Activated B cell treated with CpG ODN at 0.5 μM for 24 hours (primary cell): ENCODE measurements at regions of chr1 and their contacts with region 1.

Region 1: DNA sequence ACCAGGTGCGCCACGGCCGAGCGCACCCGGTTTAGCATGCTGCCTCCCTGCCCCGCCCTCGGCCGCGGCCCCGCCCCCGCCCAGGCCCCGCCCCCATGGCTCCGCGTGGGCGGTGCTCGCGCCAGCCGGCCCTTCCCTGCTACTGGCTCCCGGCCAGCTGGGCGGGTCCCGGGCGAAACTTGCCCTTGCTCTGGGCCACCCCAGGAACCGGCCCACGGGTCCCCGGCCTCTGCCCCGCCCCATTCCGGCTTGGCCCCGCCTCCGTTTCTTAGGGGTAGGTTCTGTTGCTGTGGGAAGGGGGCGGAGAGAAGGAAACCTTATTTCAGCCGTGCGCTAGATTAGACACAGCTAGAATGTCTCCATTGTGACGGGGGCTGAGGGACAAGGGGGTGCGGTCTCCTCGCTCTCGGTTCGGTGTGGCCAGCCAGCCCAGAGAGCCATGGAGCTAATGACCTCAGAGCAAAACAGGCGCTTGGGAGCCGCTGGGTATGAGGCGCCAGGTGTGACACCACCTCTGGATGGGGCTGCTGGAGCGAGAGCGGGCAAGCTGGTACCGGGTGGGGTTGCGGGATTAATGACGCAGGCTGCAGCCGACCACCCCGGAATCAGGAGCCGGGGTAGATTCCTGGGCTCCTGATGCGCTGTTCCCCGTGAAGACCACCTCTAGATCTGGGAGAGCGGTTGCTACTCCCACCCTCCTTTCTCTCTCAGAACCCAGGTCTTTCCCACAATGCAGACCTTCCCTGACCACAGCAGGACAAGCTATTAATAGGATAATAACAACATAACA is at the start of gene PPM1J:
- DNase-seq: peak; percentile 99
- ATAC-seq: peak; percentile 88
- H3K4me3 Mint-ChIP-seq: peak within 1 kb of the TSS; percentile 84
- H3K27ac Mint-ChIP-seq: peak within 1 kb of the TSS; percentile 74
- H3K4me1 Mint-ChIP-seq: peaks cover 37% of the 10 kb centered on the region
- H3K27me3 Mint-ChIP-seq: peaks cover 5% of the 10 kb centered on the region
- CTCF ChIP-seq: no peak
- total RNA-seq, gene PPM1J: 0.46 and 0.75 TPM in 2 replicates

Region 2: DNA sequence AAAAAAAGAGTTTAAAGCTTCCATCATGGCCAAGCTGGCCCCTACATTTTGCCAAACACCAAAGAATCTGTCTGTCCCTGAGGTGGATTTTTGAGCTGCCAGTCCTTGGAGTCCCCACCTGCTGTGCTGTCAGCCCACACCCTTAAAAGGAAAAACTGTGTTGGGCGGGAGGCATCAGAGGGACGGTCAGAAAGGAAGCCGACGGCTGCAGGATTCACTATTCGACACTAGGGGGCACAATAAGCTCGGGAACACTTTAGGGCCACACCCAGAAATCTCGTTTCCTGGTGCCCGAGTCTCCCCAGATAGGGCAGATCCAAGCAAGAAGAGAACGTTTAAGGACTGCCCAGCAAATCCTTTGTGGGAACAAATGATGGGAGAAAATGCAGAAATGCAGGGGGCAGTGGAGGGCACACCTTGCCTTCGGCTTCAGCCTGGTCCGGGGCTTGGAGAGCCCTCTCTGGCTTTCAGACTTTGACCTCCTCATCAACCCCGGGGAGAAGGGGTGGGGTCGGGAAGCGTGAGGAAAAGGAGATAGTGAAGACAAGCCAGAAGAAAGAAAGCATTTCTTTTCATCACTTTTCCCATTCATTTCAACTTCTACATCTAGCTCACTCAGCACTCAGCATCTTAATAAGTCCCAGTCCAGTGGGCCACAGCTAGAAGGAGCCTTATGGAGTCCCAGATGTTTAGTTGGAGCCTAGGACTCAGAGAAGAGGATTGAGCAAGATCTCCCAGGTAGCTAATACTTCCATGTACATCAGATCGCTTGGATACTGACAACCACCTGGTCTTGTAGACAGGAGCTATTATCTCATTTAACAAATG is 324.5 kb before region 1 on chr1:
- CTCF ChIA-PET with region 1: interaction called, 48 read pairs
- POLR2A ChIA-PET with region 1: interaction called, 6 read pairs
- intact Hi-C with region 1: loop called (anchors 1 kb)
- DNase-seq: peak; percentile 66
- ATAC-seq: peak; percentile 88
- H3K4me3 Mint-ChIP-seq: peak overlapping the region; percentile 66
- H3K27ac Mint-ChIP-seq: peak overlapping the region; percentile 46
- H3K4me1 Mint-ChIP-seq: peaks cover 31% of the 10 kb centered on the region
- H3K27me3 Mint-ChIP-seq: peaks cover 14% of the 10 kb centered on the region
- CTCF ChIP-seq: peak; percentile 89

Region 3: GRCh38 chr1:112674439-112674985 is 40.9 kb before region 1 on chr1 and contains the start of gene MOV10:
- CTCF ChIA-PET with region 1: interaction called, 18 read pairs
- POLR2A ChIA-PET with region 1: interaction called, 13 read pairs
- intact Hi-C with region 1: no loop called
- DNase-seq: peak; percentile 45
- ATAC-seq: peak; percentile 69
- H3K4me3 Mint-ChIP-seq: peak within 1 kb of the TSS; percentile 97
- H3K27ac Mint-ChIP-seq: peak within 1 kb of the TSS; percentile 88
- H3K4me1 Mint-ChIP-seq: peaks cover 35% of the 10 kb centered on the region
- H3K27me3 Mint-ChIP-seq: no peaks in the 10 kb centered on the region
- CTCF ChIP-seq: no peak
- total RNA-seq, gene MOV10: 33.3 and 36.4 TPM in 2 replicates

Region 4: DNA sequence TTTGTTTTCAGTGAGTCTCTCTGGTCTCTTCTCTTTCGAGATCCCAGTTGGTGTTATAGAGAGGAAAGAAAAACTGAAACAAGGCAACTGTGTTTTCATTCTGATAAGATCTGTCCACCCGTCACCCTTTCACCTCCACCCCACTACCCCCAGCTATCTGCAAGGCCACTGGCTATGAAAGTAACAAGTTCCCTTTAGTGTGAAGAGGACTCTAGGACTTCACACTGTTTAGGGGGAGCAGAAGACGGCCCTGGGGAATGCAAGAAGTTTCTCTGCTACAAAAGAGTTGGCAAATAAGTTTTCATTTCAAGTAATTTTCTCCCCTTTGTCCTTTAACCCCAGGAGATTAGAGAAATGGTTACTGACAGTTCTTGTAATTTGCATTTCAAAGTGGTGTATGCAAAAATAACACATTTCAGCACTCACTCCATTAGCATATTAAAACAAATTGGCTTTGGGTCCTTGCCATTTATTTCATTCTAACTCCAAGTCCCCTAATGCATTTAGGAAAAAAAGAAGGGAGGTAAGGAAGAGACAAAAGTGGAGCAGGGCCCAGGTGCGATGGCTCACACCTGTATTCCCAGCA is 79.3 kb after region 1 on chr1:
- CTCF ChIA-PET with region 1: no interaction called
- POLR2A ChIA-PET with region 1: no interaction called
- intact Hi-C with region 1: no loop called
- DNase-seq: no peak
- ATAC-seq: no peak
- H3K4me3 Mint-ChIP-seq: no peak overlapping the region
- H3K27ac Mint-ChIP-seq: no peak overlapping the region
- H3K4me1 Mint-ChIP-seq: peaks cover 9% of the 10 kb centered on the region
- H3K27me3 Mint-ChIP-seq: peaks cover 10% of the 10 kb centered on the region
- CTCF ChIP-seq: no peak

Region 5: GRCh38 chr1:112882271-112882744 is 166.8 kb after region 1 on chr1:
- CTCF ChIA-PET with region 1: interaction called, 5 read pairs
- POLR2A ChIA-PET with region 1: no interaction called
- intact Hi-C with region 1: loop called (anchors 1 kb)
- DNase-seq: no peak
- ATAC-seq: no peak
- H3K4me3 Mint-ChIP-seq: no peak overlapping the region
- H3K27ac Mint-ChIP-seq: no peak overlapping the region
- H3K4me1 Mint-ChIP-seq: no peaks in the 10 kb centered on the region
- H3K27me3 Mint-ChIP-seq: peaks cover 7% of the 10 kb centered on the region
- CTCF ChIP-seq: no peak

Region 6: DNA sequence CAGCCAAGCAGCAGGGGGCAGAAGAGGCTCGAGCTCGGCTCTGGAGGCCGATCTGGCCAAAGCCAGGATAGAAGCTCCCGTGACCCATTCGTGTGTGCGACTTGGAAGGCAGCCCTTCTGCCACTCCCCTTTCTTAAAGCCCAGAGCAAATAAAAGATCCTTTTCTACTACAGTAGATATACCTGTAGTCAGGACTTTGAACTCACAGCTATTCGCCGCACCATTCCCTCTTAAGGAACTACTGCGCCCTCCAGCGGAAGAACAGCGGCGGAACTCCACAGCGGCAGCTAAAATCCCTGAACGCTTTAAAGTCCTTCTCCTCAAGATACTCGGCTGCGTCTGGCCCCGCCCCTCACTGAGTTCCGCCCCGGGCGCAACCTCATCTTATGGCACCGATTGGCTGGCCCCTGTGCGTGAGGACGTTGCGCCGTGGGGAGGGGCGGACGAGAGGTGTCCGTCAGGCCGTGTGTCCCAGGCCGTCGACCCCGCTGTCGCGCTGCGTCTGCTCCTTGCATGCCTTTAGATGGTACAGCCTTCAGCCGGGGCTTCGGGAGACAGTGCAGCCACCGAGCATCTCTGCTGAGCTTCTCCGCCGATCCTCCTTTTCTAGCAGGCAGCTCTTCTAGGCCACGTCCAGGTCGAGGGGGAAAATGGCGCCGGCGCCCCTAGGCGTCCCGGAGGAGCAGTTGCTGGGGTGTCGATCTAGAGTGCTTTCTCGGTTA is 357.5 kb after region 1 on chr1 and contains the start of gene LRIG2:
- CTCF ChIA-PET with region 1: interaction called, 36 read pairs
- POLR2A ChIA-PET with region 1: interaction called, 29 read pairs
- intact Hi-C with region 1: loop called (anchors 2 kb)
- DNase-seq: peak; percentile 96
- ATAC-seq: peak; percentile 96
- H3K4me3 Mint-ChIP-seq: peak within 1 kb of the TSS; percentile 95
- H3K27ac Mint-ChIP-seq: peak within 1 kb of the TSS; percentile 95
- H3K4me1 Mint-ChIP-seq: peaks cover 31% of the 10 kb centered on the region
- H3K27me3 Mint-ChIP-seq: no peaks in the 10 kb centered on the region
- CTCF ChIP-seq: peak; percentile 49
- total RNA-seq, gene LRIG2: 23.8 and 30.7 TPM in 2 replicates

Region 7: DNA sequence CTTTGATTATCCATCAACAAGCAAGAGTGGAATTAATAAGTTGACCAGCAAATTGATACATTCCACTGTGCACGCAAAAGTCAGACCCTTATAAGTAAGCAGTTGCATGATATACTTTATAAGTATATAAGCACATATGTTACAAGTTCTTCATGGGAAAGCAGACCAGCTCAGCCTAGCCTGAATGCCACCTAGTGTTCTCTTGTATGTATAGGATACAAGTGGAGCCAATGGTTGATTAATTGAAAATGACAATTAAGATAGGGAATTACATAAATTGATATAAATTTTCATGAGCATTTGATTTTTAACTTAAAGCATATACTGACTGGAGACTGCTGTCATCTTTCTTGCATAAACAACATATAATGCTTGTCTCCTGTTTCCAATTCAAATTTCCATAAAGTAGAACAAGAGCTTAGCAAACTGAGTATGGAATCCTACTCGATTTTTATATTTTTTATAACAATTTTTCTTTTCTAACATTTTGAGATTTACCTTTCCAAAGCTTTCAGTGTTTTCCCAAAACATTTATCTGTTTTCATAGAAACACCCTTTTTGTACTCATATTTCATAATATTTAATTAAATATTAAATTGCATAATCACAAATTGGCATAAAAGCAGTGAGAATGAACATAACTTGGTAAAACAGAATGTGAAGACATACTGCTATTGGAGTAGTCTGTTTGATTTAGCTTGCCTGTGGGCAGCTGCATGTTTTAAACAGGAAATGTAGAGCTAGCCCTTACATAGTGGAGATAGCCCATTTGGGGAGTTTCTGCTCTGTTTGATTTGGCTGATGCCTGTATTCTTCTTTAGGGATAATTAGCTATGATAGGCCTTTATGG is 737.7 kb after region 1 on chr1:
- CTCF ChIA-PET with region 1: interaction called, 4 read pairs
- POLR2A ChIA-PET with region 1: no interaction called
- intact Hi-C with region 1: loop called (anchors 1 kb)
- DNase-seq: no peak
- ATAC-seq: no peak
- H3K4me3 Mint-ChIP-seq: no peak overlapping the region
- H3K27ac Mint-ChIP-seq: no peak overlapping the region
- H3K4me1 Mint-ChIP-seq: no peaks in the 10 kb centered on the region
- H3K27me3 Mint-ChIP-seq: peaks cover 6% of the 10 kb centered on the region
- CTCF ChIP-seq: no peak

Region 8: DNA sequence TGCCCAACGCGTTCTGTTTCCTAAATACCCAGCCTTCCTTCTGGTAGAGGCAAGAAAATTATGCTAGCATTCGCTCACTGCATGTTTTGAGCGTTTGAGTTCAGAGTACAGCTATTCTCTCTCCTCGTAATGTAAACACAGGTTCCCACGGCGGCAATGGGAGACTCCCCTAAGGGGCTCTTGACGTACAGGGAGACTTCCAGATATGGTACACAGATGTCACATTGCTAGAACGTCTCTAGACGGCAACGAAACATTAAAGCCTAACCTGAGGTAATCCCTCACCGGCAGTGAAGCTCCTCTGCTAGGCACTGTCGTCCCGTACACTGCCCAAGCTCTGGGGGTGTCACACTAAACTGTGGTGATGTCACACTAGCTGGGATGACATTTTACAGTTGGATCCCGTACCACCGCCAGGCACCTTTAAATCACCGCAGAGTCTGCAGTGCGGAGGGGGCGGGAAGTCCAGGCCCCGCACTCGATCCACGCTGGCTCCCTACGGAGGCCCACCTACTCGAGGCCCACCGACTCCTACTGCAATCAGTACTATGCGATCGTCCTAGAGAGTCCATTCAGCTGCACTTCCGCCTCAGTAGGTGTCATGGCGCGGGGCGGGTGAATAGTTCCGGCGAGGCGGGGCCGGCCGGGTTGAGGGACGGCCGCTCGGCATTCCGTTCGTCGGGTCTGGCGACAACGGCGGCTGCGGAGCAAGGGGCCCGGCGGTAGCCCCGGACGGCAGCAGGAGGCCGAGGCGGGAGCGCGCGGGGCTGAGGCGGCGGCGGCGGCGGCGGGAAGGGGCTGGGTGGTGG is 1213.7 kb after region 1 on chr1 and contains the start of gene HIPK1:
- CTCF ChIA-PET with region 1: no interaction called
- POLR2A ChIA-PET with region 1: no interaction called
- intact Hi-C with region 1: loop called (anchors 10 kb)
- DNase-seq: peak; percentile 93
- ATAC-seq: peak; percentile 73
- H3K4me3 Mint-ChIP-seq: peak within 1 kb of the TSS; percentile 99
- H3K27ac Mint-ChIP-seq: peak within 1 kb of the TSS; percentile 99
- H3K4me1 Mint-ChIP-seq: peaks cover 50% of the 10 kb centered on the region
- H3K27me3 Mint-ChIP-seq: no peaks in the 10 kb centered on the region
- CTCF ChIP-seq: no peak
- total RNA-seq, gene HIPK1: 38.0 and 39.0 TPM in 2 replicates